Heart right ventricle (tissue), 16 donors: ENCODE measurements at regions of chr2 and their contacts with region 1.

Region 1: GRCh38 chr2:99032786-99033185 is 96.8 kb upstream of the CRACDL start:
- DNase-seq: no peak
- ATAC-seq: no peak
- H3K4me3 ChIP-seq: no peak overlapping the region
- H3K27ac ChIP-seq: no peak overlapping the region
- H3K4me1 ChIP-seq: no peaks in the 10 kb centered on the region
- H3K27me3 ChIP-seq: peaks cover 0 to 12% (median 0%) of the 10 kb centered on the region in 7 donors
- CTCF ChIP-seq: no peak

Region 2: DNA sequence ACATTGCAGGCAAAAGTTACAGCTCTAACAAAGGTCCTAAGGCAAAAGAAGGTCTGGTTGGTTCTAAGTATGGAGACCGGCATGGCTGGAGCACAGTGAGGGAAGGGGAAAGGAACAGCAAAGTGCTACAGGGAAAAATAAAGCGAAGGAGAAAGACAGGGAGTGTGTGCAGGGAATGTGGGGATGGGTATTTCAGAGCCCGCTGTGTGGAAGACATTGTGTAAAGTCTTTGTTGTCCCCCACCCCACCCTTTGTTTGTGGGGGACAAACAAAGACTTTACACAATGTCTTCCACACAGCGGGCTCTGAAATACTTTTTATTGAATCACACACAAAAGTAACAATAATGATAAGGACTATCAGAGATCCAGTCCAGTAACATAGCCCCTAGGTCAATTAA is 79.8 kb after region 1 on chr2:
- intact Hi-C with region 1: loop called in 1 of 10 experiments (anchors 5 kb)
- DNase-seq: no peak
- ATAC-seq: no peak
- H3K4me3 ChIP-seq: no peak overlapping the region
- H3K27ac ChIP-seq: no peak overlapping the region
- H3K4me1 ChIP-seq: no peaks in the 10 kb centered on the region
- H3K27me3 ChIP-seq: peaks cover 0 to 4% (median 0%) of the 10 kb centered on the region in 7 donors
- CTCF ChIP-seq: no peak